Breast epithelium (tissue), 4 donors: ENCODE measurements at regions of chr11 and their contacts with region 1.

Region 1: DNA sequence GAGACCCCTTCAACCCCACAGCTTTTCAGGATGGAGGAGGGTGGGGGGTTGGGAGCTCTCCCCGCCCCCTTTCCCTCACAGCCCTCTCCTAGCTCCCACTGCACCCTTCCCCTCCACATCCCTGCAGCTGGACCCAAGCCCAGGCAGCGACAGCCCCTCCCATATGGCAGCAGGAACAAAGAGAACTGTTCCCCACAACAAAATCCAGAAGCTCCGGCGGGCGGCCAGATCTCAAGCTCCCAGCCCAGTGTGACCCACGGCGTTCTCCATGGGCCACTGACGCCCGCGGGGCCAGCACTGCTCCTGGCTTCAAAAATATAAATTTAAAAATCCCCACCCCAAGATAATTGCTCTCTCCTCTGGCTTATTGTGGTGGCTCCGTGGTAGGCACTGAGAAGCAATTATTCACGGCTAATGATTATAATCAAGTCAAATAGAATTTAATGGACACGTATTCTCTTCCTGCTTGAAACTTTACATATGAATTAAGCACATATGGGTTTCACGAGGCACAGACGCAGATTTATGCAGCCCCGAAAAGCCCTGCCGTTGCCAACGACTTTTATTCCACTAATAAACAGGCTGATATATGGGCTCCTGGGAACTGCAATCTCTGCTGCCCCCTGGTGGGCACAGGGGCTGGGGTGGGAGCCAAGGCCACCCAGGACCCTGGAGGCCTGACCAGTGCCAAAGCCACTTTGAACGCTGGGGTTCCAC is 17.6 kb downstream of the MACROD1 start:
- DNase-seq: peak; percentile 57 to 66
- H3K4me3 ChIP-seq: peak overlapping the region in 2 of 3 donors; percentile 12 to 47
- H3K27ac ChIP-seq: no peak overlapping the region
- H3K4me1 ChIP-seq: no peaks in the 10 kb centered on the region
- H3K27me3 ChIP-seq: no peaks in the 10 kb centered on the region
- CTCF ChIP-seq: peak; percentile 88 to 92 (median 92)
- POLR2A ChIP-seq: no peak

Region 2: DNA sequence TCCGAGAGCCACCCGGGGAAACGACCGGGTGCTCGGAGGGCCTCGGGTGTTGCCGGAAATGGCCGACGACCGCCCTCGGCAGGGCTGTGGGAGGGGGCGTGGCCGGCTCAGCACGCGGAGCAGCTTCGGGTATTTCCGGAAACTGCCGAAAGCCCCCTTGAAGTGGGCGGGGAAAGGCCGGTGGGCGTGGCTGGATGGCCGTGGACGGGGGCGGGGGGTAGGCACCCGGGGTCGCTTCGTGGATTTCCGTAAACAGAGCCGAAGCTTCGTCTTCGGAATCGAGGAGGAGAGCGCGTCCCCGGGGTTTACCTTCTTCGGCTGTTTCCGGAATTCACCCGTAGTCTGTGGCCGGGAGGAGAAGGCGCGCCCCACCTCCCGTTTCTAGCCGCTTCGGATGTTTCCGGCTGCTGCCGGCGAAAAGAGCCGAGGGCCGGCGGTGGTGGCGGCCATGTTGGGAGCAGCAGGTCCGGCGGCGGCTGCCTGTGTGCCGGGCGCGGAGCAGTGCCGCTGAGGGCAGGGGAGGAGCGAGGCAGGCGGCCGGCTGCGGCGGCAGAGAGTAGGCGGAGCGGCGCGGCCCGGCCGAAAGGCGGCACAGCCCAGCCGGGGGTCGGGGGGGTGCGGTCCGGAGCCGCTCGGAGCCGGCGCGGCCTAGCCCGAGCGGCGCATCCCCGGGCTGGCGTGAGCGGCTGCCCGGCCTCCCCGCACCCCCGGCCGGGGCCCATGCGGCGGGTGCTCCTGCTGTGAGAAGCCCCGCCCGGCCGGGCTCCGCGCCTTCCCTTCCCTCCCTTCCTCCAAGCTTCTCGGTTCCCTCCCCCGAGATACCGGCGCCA is 309.5 kb before region 1 on chr11 and contains the start of gene MARK2:
- intact Hi-C with region 1: loop called (anchors 5 kb)
- DNase-seq: peak; percentile 97 to 99
- H3K4me3 ChIP-seq: peak within 1 kb of the TSS; percentile 66 to 93 (median 93)
- H3K27ac ChIP-seq: peak within 1 kb of the TSS; percentile 88 to 93
- H3K4me1 ChIP-seq: peaks cover 0 to 21% of the 10 kb centered on the region in 2 donors
- H3K27me3 ChIP-seq: no peaks in the 10 kb centered on the region
- CTCF ChIP-seq: peak in 1 of 3 donors; percentile 24
- POLR2A ChIP-seq: peak; percentile 71
- total RNA-seq, gene MARK2: 12.6 to 34.0 (median 22.3) TPM

Region 3: DNA sequence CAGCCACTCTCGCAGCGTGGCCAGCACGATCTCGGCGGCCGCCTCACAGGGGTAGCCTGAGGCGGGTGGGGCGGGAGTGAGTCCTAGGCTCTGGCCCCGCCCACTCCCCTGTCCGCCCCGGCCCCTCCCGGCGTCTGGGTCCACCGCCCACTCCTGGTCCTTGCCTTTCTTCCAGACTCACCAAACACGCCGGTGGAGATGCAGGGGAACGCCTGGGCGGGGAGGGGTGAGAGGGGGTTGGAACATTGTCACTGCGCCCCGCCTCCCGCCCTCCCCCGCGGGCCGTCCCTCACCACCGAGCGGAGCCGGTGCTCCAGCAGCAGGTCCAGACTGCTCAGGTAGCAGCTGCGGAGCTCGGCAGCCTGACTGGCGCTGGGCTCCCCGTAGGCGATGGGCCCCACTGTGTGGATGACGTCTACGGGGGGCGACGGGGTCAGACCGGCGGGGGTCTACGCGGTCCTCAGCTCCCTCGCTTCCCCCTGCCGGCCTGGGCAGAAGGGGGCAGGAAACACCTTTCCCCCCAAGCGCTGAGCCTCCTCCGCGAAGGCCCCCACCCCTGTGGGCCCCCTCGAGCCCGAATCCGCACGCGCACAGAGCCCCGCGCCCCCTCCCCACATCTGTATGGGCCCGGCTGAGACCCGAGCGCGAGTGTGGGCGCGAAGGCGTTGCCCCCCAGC is 148.9 kb before region 1 on chr11:
- intact Hi-C with region 1: loop called (anchors 5 kb)
- DNase-seq: peak; percentile 80 to 83
- H3K4me3 ChIP-seq: peak overlapping the region; percentile 27 to 67 (median 45)
- H3K27ac ChIP-seq: peak overlapping the region in 1 of 2 donors; percentile 12
- H3K4me1 ChIP-seq: peaks cover 15 to 17% of the 10 kb centered on the region in 2 donors
- H3K27me3 ChIP-seq: no peaks in the 10 kb centered on the region
- CTCF ChIP-seq: no peak
- POLR2A ChIP-seq: no peak